H1 (cell line): ENCODE measurements at regions of chr6 and their contacts with region 1.

Region 1: GRCh38 chr6:148134592-148134991 is 208.0 kb upstream of the SASH1 start:
- DNase-seq: no peak
- H3K4me3 ChIP-seq: no peak overlapping the region
- H3K27ac ChIP-seq: no peak overlapping the region
- H3K4me1 ChIP-seq: no peaks in the 10 kb centered on the region
- H3K27me3 ChIP-seq: no peaks in the 10 kb centered on the region
- CTCF ChIP-seq: no peak
- EP300 ChIP-seq: no peak
- POLR2A ChIP-seq: no peak
- RAD21 ChIP-seq: no peak

Region 2: DNA sequence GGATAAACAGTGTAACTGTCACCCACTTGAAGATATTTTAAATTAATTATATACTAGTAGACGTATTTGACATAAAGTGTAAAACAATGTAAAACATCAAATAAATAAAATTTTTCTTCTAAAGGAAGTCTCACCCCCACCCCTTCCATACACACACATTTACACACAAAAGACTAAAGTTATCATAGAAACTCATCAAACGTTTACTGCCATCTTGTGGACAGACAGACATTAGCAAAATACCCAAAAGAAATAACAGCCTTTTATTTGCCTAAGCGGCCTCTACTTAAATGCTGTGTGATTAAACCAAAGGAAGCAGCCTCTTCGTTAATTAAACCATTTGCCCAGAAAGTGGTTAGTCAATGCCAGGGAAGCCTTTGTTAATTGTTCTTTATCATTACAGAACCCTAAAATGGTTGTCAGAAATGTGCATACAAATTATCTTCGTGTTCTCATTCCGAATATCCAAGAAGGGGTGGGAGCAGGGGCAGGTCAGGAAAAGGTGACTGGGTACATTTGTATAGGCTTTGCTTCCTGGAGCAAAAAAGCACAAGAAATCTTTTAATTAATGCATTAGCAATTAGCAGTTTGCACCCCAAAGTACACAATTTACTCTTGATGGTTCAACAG is 31.9 kb after region 1 on chr6:
- CTCF ChIA-PET with region 1: interaction called, 12 read pairs
- POLR2A ChIA-PET with region 1: no interaction called
- DNase-seq: no peak
- H3K4me3 ChIP-seq: no peak overlapping the region
- H3K27ac ChIP-seq: no peak overlapping the region
- H3K4me1 ChIP-seq: no peaks in the 10 kb centered on the region; a peak in 1 of 7 replicates
- H3K27me3 ChIP-seq: no peaks in the 10 kb centered on the region
- CTCF ChIP-seq: peak in 2 of 3 experiments; percentile 40 to 56; a peak in 2 of 4 replicates
- EP300 ChIP-seq: no peak
- POLR2A ChIP-seq: no peak
- RAD21 ChIP-seq: peak; percentile 78 to 81